ENCODE measurements at regions of chr16 and their contacts with region 1.

Region 1: DNA sequence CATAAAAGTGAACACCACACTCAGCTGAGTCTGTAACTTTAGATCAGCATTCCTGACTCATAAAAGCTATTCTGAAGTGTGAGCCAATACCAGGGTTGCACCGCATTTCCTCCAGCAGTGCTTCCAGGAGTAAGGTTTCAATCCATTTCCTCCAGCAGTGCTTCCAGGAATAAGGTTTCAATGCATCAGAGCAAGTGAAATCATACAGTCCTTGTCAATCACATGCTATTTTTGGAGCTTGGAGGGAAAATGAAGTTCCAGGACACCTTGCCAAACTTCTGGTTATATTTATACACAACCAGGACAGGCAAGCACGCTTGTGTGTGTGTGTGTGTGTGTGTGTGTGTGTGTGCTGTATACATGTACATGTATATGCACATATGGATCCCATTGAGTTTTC is 327.6 kb downstream of the GRIN2A start:
- DNase-seq: no peak
- ATAC-seq: no peak
- H3K4me3 ChIP-seq: no peak overlapping the region
- H3K4me1 ChIP-seq: no peaks in the 10 kb centered on the region
- CTCF ChIP-seq: no peak

Region 2: GRCh38 chr16:9741776-9742175 is 112.9 kb before region 1 on chr16:
- intact Hi-C with region 1: no loop called
- DNase-seq: no peak
- ATAC-seq: no peak
- H3K4me3 ChIP-seq: no peak overlapping the region
- H3K4me1 ChIP-seq: no peaks in the 10 kb centered on the region
- CTCF ChIP-seq: no peak

Region 3: GRCh38 chr16:9913604-9914326 is 59.1 kb after region 1 on chr16:
- intact Hi-C with region 1: loop called in 1 of 2 experiments (anchors 10 kb)
- DNase-seq: no peak
- ATAC-seq: no peak
- H3K4me3 ChIP-seq: no peak overlapping the region
- H3K4me1 ChIP-seq: no peaks in the 10 kb centered on the region
- CTCF ChIP-seq: no peak

Region 4: DNA sequence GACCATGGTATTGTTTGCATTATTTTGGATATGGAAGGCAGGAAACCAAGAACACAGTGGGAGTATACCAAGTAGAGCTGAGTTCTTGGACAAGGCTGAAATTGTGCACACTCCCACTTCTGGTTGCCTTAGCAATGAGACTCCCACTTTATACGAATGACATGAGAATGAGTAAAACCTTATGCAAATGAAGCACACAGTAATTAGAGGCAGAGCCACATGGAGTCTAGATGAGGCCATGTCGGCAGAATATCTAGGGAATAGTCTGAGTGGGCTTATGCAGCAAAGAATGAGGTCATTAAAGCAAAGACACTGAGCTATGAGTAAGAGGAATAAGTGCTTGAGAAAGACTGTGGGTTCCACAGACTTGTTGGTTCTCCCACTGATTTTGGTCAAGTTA is 148.8 kb after region 1 on chr16:
- intact Hi-C with region 1: no loop called
- DNase-seq: no peak
- ATAC-seq: no peak
- H3K4me3 ChIP-seq: no peak overlapping the region
- H3K4me1 ChIP-seq: no peaks in the 10 kb centered on the region
- CTCF ChIP-seq: no peak